ENCODE measurements at regions of chr4 and their contacts with region 1.

Region 1: DNA sequence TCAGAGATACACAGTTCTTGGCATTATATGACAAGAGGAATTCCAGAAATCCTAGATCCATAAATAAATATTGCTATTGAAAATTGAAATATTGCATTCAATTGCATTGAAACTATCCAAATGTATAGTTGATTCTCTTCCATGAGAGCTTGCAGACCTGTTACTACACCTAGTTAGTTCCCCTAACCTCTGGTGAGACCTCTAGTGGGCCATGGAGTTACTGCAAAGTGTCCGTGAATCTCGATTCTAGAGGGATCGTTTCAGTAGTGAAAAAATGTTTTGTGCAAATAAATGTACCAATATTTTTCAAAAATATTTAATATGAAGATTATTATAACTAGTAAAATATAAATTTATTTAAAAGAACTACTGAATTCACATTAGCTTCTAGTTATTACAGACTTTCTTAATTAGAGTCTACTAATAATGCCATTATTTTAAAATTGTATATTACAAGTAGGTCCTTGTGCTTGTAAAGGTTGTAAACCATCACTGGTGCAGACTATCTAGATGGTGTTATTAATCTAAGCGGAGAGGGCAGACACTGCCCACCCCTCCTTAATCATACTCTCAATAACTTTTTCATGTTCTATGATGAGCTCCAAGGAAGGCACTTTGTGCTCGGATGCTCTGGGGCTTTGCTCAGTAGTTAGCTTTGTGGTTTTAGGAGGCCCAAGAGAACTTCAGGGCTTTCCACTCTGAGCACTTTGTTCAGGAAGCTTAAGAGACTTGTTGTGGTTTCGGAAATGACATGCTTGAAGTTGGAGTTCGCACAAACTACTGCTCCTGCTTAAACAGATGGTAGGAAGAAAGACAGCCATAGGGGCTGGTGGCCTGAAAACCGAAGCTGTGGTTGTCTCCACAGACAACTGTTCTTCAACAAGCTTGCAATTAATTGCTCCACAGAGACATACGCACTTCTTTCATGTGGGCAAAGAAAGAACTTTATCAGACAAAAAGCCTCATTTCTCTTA is 42.8 kb downstream of the IL21 start:
- DNase-seq: peak; percentile 48
- ATAC-seq: peak; percentile 87
- H3K4me3 ChIP-seq: no peak overlapping the region
- H3K27ac ChIP-seq: no peak overlapping the region
- H3K4me1 ChIP-seq: no peaks in the 10 kb centered on the region
- H3K27me3 ChIP-seq: no peaks in the 10 kb centered on the region
- CTCF ChIP-seq: peak; percentile 38 to 87 (median 73); a peak in 5 of 6 replicates
- POLR2A ChIP-seq: no peak
- RAD21 ChIP-seq: peak; percentile 37

Region 2: DNA sequence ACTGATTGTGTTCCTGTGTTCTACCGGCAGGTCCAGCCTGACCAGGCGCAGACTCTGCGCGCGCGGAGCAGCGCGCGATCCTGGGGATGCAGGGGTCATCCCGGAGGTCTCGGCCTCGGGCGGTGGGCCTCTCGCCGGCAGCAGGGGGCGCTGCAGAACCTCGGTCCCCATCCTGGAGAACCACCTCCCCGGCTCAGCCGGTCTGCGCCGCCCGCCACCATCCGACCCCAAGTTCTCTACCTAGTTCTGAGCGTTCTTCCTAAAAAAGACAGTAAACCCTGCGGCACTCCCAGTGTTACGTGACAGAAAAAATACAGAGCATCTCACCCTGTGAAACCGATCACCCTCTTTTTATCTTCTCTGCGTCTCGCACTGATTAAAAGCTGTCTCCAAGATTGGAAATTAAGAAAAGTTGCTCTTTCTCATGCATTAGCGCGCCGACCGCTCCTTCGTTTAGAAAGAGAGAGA is 627.8 kb before region 1 on chr4:
- CTCF ChIA-PET with region 1: no interaction called
- POLR2A ChIA-PET with region 1: no interaction called
- RAD21 ChIA-PET with region 1: no interaction called
- intact Hi-C with region 1: loop called (anchors 2 kb)
- DNase-seq: peak; percentile 21
- ATAC-seq: peak; percentile 90
- H3K4me3 ChIP-seq: peak overlapping the region; percentile 30 to 53
- H3K27ac ChIP-seq: no peak overlapping the region
- H3K4me1 ChIP-seq: peaks cover 0 to 11% of the 10 kb centered on the region in 2 experiments; a peak in 1 of 4 replicates
- H3K27me3 ChIP-seq: no peaks in the 10 kb centered on the region
- CTCF ChIP-seq: peak; percentile 46 to 74 (median 73); a peak in 5 of 6 replicates
- POLR2A ChIP-seq: no peak
- RAD21 ChIP-seq: peak; percentile 70

Region 3: GRCh38 chr4:122309988-122310626 is 268.0 kb before region 1 on chr4:
- CTCF ChIA-PET with region 1: interaction called, 3 read pairs
- POLR2A ChIA-PET with region 1: no interaction called
- RAD21 ChIA-PET with region 1: no interaction called
- intact Hi-C with region 1: loop called (anchors 1 kb)
- DNase-seq: no peak
- ATAC-seq: no peak
- H3K4me3 ChIP-seq: no peak overlapping the region
- H3K27ac ChIP-seq: no peak overlapping the region
- H3K4me1 ChIP-seq: no peaks in the 10 kb centered on the region
- H3K27me3 ChIP-seq: no peaks in the 10 kb centered on the region
- CTCF ChIP-seq: peak; percentile 19 to 56 (median 41); a peak in 4 of 6 replicates
- POLR2A ChIP-seq: no peak
- RAD21 ChIP-seq: peak; percentile 48

Region 4: DNA sequence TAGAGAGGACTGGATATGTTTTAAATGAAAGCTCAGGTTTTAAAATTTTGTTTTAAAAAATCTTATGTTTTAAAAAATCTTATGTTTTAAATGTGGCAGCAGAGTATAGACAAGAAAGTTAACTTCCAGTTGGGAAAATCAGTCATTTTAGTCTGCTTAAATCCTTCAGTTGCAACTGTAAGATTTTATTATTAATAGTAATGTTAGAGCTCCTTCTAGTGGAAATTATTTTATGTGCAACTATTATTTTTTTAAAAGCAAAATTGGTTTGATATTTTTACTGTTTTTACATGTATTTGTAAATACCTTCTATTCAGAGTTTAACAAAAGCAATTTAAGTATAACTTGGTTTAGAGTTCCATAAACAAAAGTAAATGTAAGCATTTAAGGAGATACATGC is 352.8 kb after region 1 on chr4:
- CTCF ChIA-PET with region 1: interaction called, 14 read pairs
- POLR2A ChIA-PET with region 1: no interaction called
- RAD21 ChIA-PET with region 1: interaction called in 1 of 2 experiments, 3 read pairs
- intact Hi-C with region 1: loop called (anchors 1 kb)
- DNase-seq: no peak
- ATAC-seq: no peak
- H3K4me3 ChIP-seq: no peak overlapping the region
- H3K27ac ChIP-seq: no peak overlapping the region
- H3K4me1 ChIP-seq: no peaks in the 10 kb centered on the region
- H3K27me3 ChIP-seq: no peaks in the 10 kb centered on the region
- CTCF ChIP-seq: peak in 2 of 3 experiments; percentile 55 to 64; a peak in 3 of 6 replicates
- POLR2A ChIP-seq: no peak
- RAD21 ChIP-seq: peak; percentile 60